ENCODE measurements at regions of chr22 and their contacts with region 1.

Region 1: DNA sequence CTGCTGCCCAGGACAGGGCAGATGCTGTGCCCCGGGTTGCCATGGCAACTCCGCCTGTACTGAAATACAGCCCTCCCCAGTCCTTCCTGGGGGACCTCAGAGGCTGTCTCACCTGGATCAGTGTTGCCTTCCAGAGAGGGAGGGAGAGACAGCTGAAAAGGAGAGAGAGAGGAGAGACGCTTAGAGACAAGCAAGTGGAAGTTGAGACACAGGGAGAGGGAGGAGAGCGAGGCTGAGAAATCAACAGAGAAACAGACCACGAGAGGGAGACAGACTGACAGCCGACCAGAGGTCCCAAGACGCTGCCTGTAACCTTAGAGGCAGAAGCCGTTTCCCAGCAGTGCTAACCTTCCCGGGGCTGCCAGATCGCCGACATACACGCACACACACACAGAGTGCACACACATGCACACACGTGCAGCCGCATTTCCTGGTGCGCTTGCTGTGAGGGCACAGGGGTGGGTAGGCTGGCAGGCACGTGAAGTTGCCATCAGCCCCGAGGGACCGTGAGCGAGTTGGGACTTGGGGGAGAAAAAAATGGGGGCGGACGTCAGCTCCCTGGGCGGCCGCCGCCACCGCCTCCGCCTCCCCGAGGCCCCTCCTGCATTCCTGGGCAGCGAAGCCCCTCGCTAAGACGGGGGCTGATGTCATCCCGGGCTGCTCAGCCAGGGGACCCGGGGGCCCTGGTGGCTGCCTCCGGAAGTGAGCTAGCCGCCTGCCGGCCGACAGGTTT is 88.6 kb upstream of the CRYBB3 start:
- DNase-seq: peak; percentile 66 to 85
- ATAC-seq: peak; percentile 55 to 57
- H3K4me3 ChIP-seq: peak overlapping the region; percentile 71 to 80 (median 79)
- H3K27ac ChIP-seq: peak overlapping the region; percentile 85 to 99 (median 95)
- H3K4me1 ChIP-seq: peaks cover 26 to 31% of the 10 kb centered on the region in 2 donors
- H3K27me3 ChIP-seq: no peaks in the 10 kb centered on the region
- CTCF ChIP-seq: peak; percentile 20 to 70 (median 53)
- POLR2A ChIP-seq: peak; percentile 50 to 57

Region 2: DNA sequence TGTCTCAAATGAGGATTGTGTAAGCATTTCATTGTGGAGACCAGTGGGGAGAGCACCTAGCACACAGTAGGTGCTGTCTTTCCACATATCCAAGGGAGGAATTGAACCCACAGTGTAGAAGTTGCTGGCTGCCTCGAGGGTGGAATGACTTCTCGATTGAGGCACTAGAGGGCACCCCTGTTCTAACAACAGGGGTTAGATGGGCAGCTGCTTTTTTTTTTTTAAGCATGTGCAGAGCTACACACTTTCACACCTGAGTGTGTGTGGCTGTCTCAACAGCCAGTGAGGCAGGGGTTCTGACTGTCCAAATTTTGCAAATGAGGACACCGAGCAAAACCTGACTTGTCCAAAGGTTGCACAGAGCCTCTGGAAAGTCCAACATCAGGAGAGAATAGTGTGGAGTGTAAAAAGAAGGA is 29.6 kb before region 1 on chr22:
- in situ Hi-C with region 1: no loop called
- intact Hi-C with region 1: no loop called
- DNase-seq: no peak
- ATAC-seq: peak in 1 of 2 donors; percentile 60
- H3K4me3 ChIP-seq: no peak overlapping the region
- H3K27ac ChIP-seq: no peak overlapping the region
- H3K4me1 ChIP-seq: no peaks in the 10 kb centered on the region
- H3K27me3 ChIP-seq: no peaks in the 10 kb centered on the region
- CTCF ChIP-seq: peak in 4 of 5 experiments; percentile 14 to 55 (median 42)
- POLR2A ChIP-seq: no peak

Region 3: DNA sequence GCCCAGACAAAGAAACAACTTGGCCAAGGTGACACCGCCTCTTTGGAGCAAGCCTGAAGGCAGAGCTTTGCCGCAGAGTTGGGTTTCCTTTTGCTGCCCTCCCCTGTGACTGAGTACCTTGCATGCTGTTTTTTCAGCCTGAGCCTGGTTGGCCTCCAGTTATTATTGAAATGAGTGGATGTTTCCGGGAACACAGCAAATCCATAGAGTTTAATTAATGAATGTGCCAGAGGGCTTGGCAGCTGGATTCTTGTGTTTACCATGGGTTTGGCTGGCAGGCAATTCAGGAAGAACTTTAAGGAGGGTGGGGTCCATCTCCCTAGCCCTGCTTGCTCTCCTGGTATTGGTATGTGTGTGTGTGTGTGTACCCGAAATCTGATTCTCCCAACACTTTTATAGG is 23.0 kb after region 1 on chr22:
- in situ Hi-C with region 1: no loop called
- intact Hi-C with region 1: loop called (anchors 2 kb)
- DNase-seq: no peak
- ATAC-seq: peak in 1 of 2 donors; percentile 15
- H3K4me3 ChIP-seq: no peak overlapping the region
- H3K27ac ChIP-seq: peak overlapping the region; percentile 73 to 90 (median 83)
- H3K4me1 ChIP-seq: peaks cover 57 to 93% of the 10 kb centered on the region in 2 donors
- H3K27me3 ChIP-seq: no peaks in the 10 kb centered on the region
- CTCF ChIP-seq: no peak
- POLR2A ChIP-seq: no peak

Region 4: GRCh38 chr22:25161017-25161915 is 50.3 kb after region 1 on chr22:
- in situ Hi-C with region 1: loop called in 1 of 4 experiments (anchors 10 kb)
- intact Hi-C with region 1: loop called (anchors 1 kb)
- DNase-seq: no peak
- ATAC-seq: no peak
- H3K4me3 ChIP-seq: no peak overlapping the region
- H3K27ac ChIP-seq: peak overlapping the region; percentile 90 to 95 (median 92)
- H3K4me1 ChIP-seq: peaks cover 19 to 75% of the 10 kb centered on the region in 2 donors
- H3K27me3 ChIP-seq: no peaks in the 10 kb centered on the region
- CTCF ChIP-seq: no peak
- POLR2A ChIP-seq: no peak

Region 5: DNA sequence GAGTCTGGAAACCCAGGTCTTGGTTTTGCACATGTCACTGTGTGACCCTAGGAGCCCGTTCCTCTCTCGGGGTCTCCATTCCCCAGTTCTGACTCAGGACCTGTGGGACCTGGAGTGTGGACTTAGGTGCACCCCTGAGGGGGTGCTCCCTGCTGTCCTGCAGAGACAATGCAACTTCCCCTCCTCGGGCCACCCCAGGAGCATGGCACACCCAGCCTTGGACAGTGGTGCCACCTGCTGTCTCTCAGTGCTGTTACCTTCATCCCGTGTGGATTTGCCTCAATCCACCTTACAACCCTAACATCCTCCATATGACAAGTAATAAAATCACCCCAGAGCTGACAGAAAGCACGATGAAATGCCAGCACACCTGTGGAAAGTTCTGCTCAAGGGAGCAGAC is 61.1 kb after region 1 on chr22:
- in situ Hi-C with region 1: loop called in 2 of 4 experiments (anchors 5 to 10 kb)
- intact Hi-C with region 1: loop called (anchors 1 kb)
- DNase-seq: peak in 1 of 2 donors; percentile 66
- ATAC-seq: peak; percentile 61 to 69
- H3K4me3 ChIP-seq: no peak overlapping the region
- H3K27ac ChIP-seq: no peak overlapping the region
- H3K4me1 ChIP-seq: no peaks in the 10 kb centered on the region
- H3K27me3 ChIP-seq: no peaks in the 10 kb centered on the region
- CTCF ChIP-seq: peak; percentile 63 to 77 (median 68)
- POLR2A ChIP-seq: no peak

Region 6: DNA sequence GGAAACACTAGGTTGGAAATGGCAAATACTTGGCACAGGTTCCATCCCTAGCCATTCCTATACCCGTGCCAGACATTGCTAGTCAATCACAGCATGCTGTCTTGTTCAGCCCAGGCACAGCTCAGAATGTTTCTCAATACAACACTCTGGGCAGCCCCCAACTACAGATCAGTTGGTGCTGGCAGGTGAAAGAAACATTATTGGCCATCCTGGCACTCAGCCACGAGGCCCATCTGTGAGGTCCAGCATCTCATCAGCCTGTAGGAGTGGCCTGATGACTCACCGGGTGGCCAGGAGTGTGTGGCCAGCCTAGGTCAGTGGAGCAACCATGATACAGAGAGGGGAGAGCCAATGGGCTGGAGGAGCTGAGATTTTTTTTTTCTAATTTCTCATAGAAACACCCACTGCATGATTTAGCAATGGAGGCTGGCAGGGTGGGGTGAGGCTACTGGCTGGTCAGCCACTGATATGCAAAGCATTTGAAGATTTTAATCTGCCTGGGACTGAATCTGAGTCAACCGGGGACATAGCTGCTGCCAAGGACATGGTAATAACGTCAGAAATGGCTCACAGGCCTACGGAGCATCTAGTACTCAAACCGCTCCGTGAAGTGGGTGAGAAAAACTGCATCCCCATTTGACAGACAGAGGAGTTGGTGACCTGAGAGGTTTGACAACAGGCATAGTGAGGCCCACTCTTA is 636.4 kb after region 1 on chr22:
- in situ Hi-C with region 1: no loop called
- intact Hi-C with region 1: loop called (anchors 10 kb)
- DNase-seq: peak; percentile 86 to 98
- ATAC-seq: peak; percentile 68 to 77
- H3K4me3 ChIP-seq: peak overlapping the region; percentile 10 to 81 (median 52)
- H3K27ac ChIP-seq: peak overlapping the region; percentile 98 to 99 (median 98)
- H3K4me1 ChIP-seq: peaks cover 72 to 74% of the 10 kb centered on the region in 2 donors
- H3K27me3 ChIP-seq: no peaks in the 10 kb centered on the region
- CTCF ChIP-seq: no peak
- POLR2A ChIP-seq: peak; percentile 52